Posterior cingulate gyrus (tissue), 11 donors: ENCODE measurements at regions of chr3 and their contacts with region 1.

Region 1: GRCh38 chr3:73100741-73101559 is 39.5 kb downstream of the EBLN2 start:
- DNase-seq: peak; percentile 61 to 96 (median 90)

Region 2: GRCh38 chr3:72997421-72997961 is 103.5 kb before region 1 on chr3:
- intact Hi-C with region 1: no loop called
- DNase-seq: peak in 1 of 10 donors; percentile 32

Region 3: GRCh38 chr3:73432023-73432705 is 331.2 kb after region 1 on chr3:
- intact Hi-C with region 1: loop called (anchors 1 kb)
- DNase-seq: peak in 4 of 10 donors; percentile 21 to 85 (median 47)

Region 4: GRCh38 chr3:73502609-73503583 is 401.9 kb after region 1 on chr3:
- intact Hi-C with region 1: loop called (anchors 1 kb)
- DNase-seq: peak in 9 of 10 donors; percentile 40 to 94 (median 71)